Activated CD4-positive, alpha-beta memory T cell treated with anti-CD3 and anti-CD28 coated beads for 36 hours (primary cell): ENCODE measurements at regions of chr12 and their contacts with region 1.

Region 1: GRCh38 chr12:12008931-12009611 is 61.7 kb upstream of the BCL2L14 start:
- DNase-seq: peak; percentile 86
- H3K4me3 Mint-ChIP-seq: peak overlapping the region; percentile 76
- H3K27ac Mint-ChIP-seq: peak overlapping the region; percentile 95
- H3K4me1 Mint-ChIP-seq: peaks cover 85% of the 10 kb centered on the region
- H3K27me3 Mint-ChIP-seq: no peaks in the 10 kb centered on the region

Region 2: DNA sequence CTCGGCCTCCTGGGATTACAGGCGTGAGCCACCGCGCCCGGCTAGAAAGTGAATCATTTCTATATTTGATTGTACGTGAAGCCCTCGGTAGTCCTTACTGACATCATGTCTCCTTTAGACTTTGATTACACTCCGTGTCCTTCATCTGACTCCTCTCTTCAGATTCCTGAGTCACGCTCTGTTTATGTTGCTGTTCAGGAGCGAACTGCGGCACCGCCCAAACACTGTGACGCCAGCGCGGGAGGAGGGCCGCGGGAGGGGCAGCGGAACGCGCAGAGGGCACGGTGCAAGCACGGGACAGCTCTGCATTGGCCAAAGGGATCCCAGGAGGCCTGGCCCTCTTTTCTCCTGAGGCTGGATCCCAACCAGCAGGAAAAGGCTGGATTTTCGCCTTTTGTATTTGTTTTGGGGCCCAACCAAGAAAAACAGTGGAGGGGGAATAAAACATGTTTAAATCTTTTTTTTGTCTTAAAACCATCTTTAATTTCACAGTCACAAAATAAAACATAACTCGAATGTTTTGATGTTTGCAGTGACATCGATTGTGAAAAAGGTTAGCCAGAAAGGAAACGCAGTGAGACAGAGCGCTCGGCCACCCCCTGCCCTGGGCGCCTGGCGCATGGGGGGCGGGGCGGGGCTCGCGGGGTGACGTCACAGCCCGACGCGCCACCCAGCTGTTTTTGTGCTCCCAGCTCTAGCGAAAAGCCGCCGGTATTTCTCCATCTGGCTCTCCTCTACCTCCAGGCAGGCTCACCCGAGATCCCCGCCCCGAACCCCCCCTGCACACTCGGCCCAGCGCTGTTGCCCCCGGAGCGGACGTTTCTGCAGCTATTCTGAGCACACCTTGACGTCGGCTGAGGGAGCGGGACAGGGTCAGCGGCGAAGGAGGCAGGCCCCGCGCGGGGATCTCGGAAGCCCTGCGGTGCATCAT is 1796.6 kb before region 1 on chr12 and contains the start of gene GABARAPL1:
- CTCF ChIA-PET with region 1: no interaction called
- POLR2A ChIA-PET with region 1: no interaction called
- intact Hi-C with region 1: loop called (anchors 10 kb)
- DNase-seq: peak; percentile 94
- H3K4me3 Mint-ChIP-seq: peak within 1 kb of the TSS; percentile 89
- H3K27ac Mint-ChIP-seq: peak within 1 kb of the TSS; percentile 78
- H3K4me1 Mint-ChIP-seq: peaks cover 21% of the 10 kb centered on the region
- H3K27me3 Mint-ChIP-seq: no peaks in the 10 kb centered on the region
- total RNA-seq, gene GABARAPL1: 7.2 to 8.9 TPM

Region 3: GRCh38 chr12:11730299-11731041 is 278.6 kb before region 1 on chr12:
- CTCF ChIA-PET with region 1: no interaction called
- POLR2A ChIA-PET with region 1: interaction called, 5 read pairs
- intact Hi-C with region 1: loop called (anchors 2 kb)
- DNase-seq: peak; percentile 10
- H3K4me3 Mint-ChIP-seq: no peak overlapping the region
- H3K27ac Mint-ChIP-seq: peak overlapping the region; percentile 62
- H3K4me1 Mint-ChIP-seq: peaks cover 76% of the 10 kb centered on the region
- H3K27me3 Mint-ChIP-seq: no peaks in the 10 kb centered on the region

Region 4: GRCh38 chr12:11812586-11813427 is 196.3 kb before region 1 on chr12:
- CTCF ChIA-PET with region 1: interaction called, 4 read pairs
- POLR2A ChIA-PET with region 1: interaction called, 24 read pairs
- intact Hi-C with region 1: no loop called
- DNase-seq: peak; percentile 41
- H3K4me3 Mint-ChIP-seq: peak overlapping the region; percentile 63
- H3K27ac Mint-ChIP-seq: peak overlapping the region; percentile 78
- H3K4me1 Mint-ChIP-seq: peaks cover 80% of the 10 kb centered on the region
- H3K27me3 Mint-ChIP-seq: no peaks in the 10 kb centered on the region

Region 5: DNA sequence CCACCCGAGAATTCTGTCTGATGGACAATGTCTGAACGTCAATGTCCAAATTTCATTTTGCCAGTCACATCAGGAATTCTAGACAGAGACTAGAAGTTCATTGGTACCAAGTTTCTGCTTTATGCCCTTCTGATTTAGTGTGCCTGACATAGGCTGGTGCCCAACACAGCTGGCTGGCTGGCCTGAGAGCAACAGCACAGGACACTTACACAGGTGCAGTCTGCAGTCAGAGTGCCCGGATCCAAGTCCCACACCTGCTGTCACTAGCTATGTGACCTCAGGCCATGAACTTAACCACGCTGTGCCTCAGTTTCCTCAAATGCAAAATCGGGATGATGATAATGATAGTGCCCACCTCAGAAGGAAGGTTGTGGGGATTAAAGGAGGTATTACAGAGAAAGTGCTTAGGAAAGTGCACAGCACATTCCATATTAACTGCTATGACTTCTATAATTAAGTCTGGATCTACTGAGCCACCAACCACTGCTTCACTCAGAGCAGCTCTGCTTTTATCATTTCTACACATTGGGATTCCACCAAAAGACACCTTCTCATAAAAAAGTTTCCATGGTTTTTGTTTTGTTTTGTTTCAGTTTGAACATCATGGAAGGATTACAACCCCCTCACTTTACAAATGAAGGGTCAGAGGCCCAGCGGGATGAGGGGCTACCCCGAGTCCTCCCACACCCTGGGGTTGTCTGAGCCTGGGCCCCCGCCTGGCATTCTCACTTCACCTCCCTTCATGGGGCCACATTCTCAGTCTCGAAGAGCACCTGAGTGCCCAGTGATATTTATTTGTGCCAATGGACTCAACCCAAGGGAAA is 107.2 kb before region 1 on chr12:
- CTCF ChIA-PET with region 1: interaction called, 9 read pairs
- POLR2A ChIA-PET with region 1: interaction called, 36 read pairs
- intact Hi-C with region 1: loop called (anchors 1 kb)
- DNase-seq: peak; percentile 81
- H3K4me3 Mint-ChIP-seq: peak overlapping the region; percentile 50
- H3K27ac Mint-ChIP-seq: peak overlapping the region; percentile 92
- H3K4me1 Mint-ChIP-seq: peaks cover 52% of the 10 kb centered on the region
- H3K27me3 Mint-ChIP-seq: no peaks in the 10 kb centered on the region

Region 6: GRCh38 chr12:12024911-12025682 is 16.0 kb after region 1 on chr12:
- CTCF ChIA-PET with region 1: interaction called, 7 read pairs
- POLR2A ChIA-PET with region 1: interaction called, 19 read pairs
- intact Hi-C with region 1: loop called (anchors 1 kb)
- DNase-seq: peak; percentile 82
- H3K4me3 Mint-ChIP-seq: peak overlapping the region; percentile 2
- H3K27ac Mint-ChIP-seq: peak overlapping the region; percentile 86
- H3K4me1 Mint-ChIP-seq: peaks cover 85% of the 10 kb centered on the region
- H3K27me3 Mint-ChIP-seq: no peaks in the 10 kb centered on the region

Region 7: GRCh38 chr12:12716793-12717585 is 707.9 kb after region 1 on chr12 and contains the start of gene CDKN1B:
- CTCF ChIA-PET with region 1: no interaction called
- POLR2A ChIA-PET with region 1: interaction called, 4 read pairs
- intact Hi-C with region 1: loop called (anchors 5 kb)
- DNase-seq: peak; percentile 92
- H3K4me3 Mint-ChIP-seq: peak within 1 kb of the TSS; percentile 98
- H3K27ac Mint-ChIP-seq: peak within 1 kb of the TSS; percentile 98
- H3K4me1 Mint-ChIP-seq: peaks cover 45% of the 10 kb centered on the region
- H3K27me3 Mint-ChIP-seq: no peaks in the 10 kb centered on the region
- total RNA-seq, gene CDKN1B: 52.4 to 52.8 TPM